T-cell (primary cell): ENCODE measurements at regions of chr10 and their contacts with region 1.

Region 1: GRCh38 chr10:74921744-74922143 is 95.3 kb downstream of the KAT6B start:
- DNase-seq: no peak
- ATAC-seq: no peak
- H3K4me3 ChIP-seq: no peak overlapping the region
- H3K4me3 Mint-ChIP-seq: no peak overlapping the region
- H3K27ac ChIP-seq: no peak overlapping the region
- H3K27ac Mint-ChIP-seq: peak overlapping the region in 1 of 2 donors; percentile 39
- H3K4me1 ChIP-seq: peaks cover 0 to 5% of the 10 kb centered on the region in 2 experiments
- H3K4me1 Mint-ChIP-seq: peaks cover 53 to 62% (median 59%) of the 10 kb centered on the region in 3 donors
- H3K27me3 ChIP-seq: no peaks in the 10 kb centered on the region
- H3K27me3 Mint-ChIP-seq: no peaks in the 10 kb centered on the region

Region 2: GRCh38 chr10:74451127-74451829 is 470.5 kb before region 1 on chr10:
- CTCF ChIA-PET with region 1: no interaction called
- POLR2A ChIA-PET with region 1: interaction called in 1 of 2 experiments, 10 read pairs
- DNase-seq: no peak
- ATAC-seq: no peak
- H3K4me3 ChIP-seq: no peak overlapping the region
- H3K4me3 Mint-ChIP-seq: no peak overlapping the region
- H3K27ac ChIP-seq: no peak overlapping the region
- H3K27ac Mint-ChIP-seq: no peak overlapping the region
- H3K4me1 ChIP-seq: peaks cover 0 to 2% of the 10 kb centered on the region in 2 experiments
- H3K4me1 Mint-ChIP-seq: peaks cover 0 to 1% (median under 1%) of the 10 kb centered on the region in 3 donors
- H3K27me3 ChIP-seq: no peaks in the 10 kb centered on the region
- H3K27me3 Mint-ChIP-seq: no peaks in the 10 kb centered on the region

Region 3: DNA sequence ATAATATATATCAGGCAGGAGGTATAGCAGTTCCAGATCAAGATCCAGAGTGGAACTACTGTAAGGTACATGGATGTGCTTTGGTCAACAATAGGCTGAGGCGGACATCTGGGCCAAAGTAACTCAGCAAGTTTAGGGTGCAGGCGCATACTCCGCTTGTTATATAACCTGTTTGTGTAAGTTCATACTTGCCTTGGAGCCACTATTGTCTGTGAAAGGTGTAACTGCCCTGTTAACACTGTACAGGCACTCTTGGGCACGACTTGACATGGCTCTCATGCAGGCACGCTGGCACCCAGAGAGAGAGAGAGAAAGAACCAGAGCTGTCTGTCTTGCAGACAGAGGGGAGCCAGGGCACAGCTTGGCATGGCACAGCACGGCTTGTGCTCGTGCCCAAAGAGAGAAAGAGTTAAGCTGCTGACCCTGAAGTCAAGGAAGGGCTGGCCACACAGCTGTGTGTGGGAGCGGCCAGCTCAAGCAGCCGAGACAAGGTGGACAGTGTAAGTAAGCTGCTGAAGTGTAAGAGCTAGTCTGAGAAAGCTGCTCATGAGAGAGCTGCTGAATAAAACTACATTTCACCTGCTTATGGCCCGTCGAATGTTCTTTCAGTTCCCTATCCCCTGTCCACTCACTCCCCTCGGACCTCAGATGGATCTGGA is 143.2 kb before region 1 on chr10:
- CTCF ChIA-PET with region 1: no interaction called
- POLR2A ChIA-PET with region 1: no interaction called
- DNase-seq: no peak
- ATAC-seq: no peak
- H3K4me3 ChIP-seq: no peak overlapping the region
- H3K4me3 Mint-ChIP-seq: no peak overlapping the region
- H3K27ac ChIP-seq: no peak overlapping the region
- H3K27ac Mint-ChIP-seq: no peak overlapping the region
- H3K4me1 ChIP-seq: no peaks in the 10 kb centered on the region
- H3K4me1 Mint-ChIP-seq: no peaks in the 10 kb centered on the region
- H3K27me3 ChIP-seq: no peaks in the 10 kb centered on the region
- H3K27me3 Mint-ChIP-seq: no peaks in the 10 kb centered on the region